GM13977 (cell line): ENCODE measurements at regions of chr6 and their contacts with region 1.

Region 1: GRCh38 chr6:33248925-33249731 is 22.5 kb downstream of the VPS52 start:
- DNase-seq: peak; percentile 88
- CTCF ChIP-seq: peak; percentile 17

Region 2: GRCh38 chr6:33008944-33009861 is 239.9 kb before region 1 on chr6 and contains the start of gene HLA-DOA:
- in situ Hi-C with region 1: loop called (anchors 10 kb)
- DNase-seq: peak; percentile 96
- CTCF ChIP-seq: no peak